ENCODE measurements at regions of chr9 and their contacts with region 1.

Region 1: DNA sequence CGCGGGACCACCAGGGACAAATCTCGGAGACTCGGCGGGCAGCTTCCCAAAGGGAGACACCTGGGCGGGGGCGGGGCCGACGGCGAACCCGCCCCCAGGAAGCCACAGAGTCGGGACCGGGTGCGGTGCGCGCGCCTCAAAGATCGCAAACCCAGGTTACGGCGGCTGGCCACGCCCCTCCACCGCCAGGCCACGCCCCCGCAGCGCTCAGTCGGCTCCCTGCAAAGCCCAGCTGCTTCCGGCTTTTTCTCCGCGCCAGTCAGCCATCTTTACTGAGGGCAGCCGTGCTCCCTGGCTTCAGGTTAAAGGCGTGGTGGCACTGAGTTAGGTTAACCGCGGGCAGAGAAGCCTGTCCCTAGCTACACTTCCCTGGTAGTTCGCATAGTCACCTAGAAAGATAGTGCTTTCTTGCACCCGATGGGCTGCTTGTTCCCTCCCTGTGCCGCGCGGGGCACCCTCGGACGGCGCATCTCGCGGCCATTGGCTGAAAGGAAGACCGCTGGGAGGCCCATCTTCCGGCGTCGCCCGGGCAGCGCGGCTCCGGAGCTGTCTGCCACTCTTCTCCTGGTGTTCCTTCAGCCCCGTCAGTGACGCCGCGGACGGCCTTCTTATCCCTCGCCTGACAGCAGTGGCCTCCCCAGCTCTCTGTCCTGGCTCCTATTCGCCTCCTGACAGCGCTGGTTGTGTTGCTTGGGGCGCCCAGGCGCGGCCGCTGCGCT is at the start of gene TBC1D2:
- DNase-seq: peak; percentile 96 to 99 (median 98)
- ATAC-seq: peak; percentile 95 to 98 (median 96)
- H3K4me3 ChIP-seq: peak within 1 kb of the TSS; percentile 63 to 87 (median 73)
- H3K27ac ChIP-seq: peak within 1 kb of the TSS; percentile 89 to 97 (median 92)
- H3K4me1 ChIP-seq: peaks cover 0 to 8% (median 6%) of the 10 kb centered on the region in 3 donors
- H3K27me3 ChIP-seq: no peaks in the 10 kb centered on the region
- CTCF ChIP-seq: no peak
- total RNA-seq, gene TBC1D2: 1.9 to 5.2 (median 2.4) TPM

Region 2: GRCh38 chr9:98045234-98046179 is 210.2 kb before region 1 on chr9:
- intact Hi-C with region 1: no loop called
- DNase-seq: no peak
- ATAC-seq: peak in 3 of 4 donors; percentile 63 to 73 (median 69)
- H3K4me3 ChIP-seq: peak overlapping the region in 1 of 4 donors; percentile 21
- H3K27ac ChIP-seq: no peak overlapping the region
- H3K4me1 ChIP-seq: no peaks in the 10 kb centered on the region
- H3K27me3 ChIP-seq: no peaks in the 10 kb centered on the region
- CTCF ChIP-seq: no peak

Region 3: GRCh38 chr9:98074115-98074990 is 181.4 kb before region 1 on chr9:
- intact Hi-C with region 1: loop called in 2 of 3 experiments (anchors 10 kb)
- DNase-seq: peak in 5 of 6 donors; percentile 23 to 84 (median 48)
- ATAC-seq: peak; percentile 60 to 84 (median 76)
- H3K4me3 ChIP-seq: no peak overlapping the region
- H3K27ac ChIP-seq: no peak overlapping the region
- H3K4me1 ChIP-seq: peaks cover 0 to 13% (median 0%) of the 10 kb centered on the region in 3 donors
- H3K27me3 ChIP-seq: no peaks in the 10 kb centered on the region
- CTCF ChIP-seq: peak; percentile 83 to 96 (median 90)

Region 4: DNA sequence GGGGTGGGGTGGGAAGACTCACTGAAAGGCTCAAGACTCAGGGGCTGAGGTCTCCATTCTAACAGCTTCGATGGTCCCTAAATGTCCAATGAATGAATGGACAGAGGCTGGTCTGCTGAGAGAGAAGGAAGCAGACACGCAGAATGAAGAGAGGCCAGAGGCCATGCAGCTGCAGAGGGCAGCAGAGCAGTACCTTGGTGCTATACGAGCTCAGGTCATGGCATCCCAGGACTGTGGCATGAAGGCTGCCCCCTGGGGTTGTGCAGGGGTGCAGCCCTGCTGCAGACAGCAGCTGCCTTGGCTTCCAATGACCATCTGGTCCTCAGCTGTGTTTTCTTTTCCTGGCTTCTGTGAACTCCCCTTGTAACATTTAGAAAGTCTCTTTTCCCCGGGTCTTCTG is 48.1 kb before region 1 on chr9:
- intact Hi-C with region 1: loop called in 2 of 3 experiments (anchors 5 kb)
- DNase-seq: no peak
- ATAC-seq: no peak
- H3K4me3 ChIP-seq: no peak overlapping the region
- H3K27ac ChIP-seq: no peak overlapping the region
- H3K4me1 ChIP-seq: no peaks in the 10 kb centered on the region
- H3K27me3 ChIP-seq: no peaks in the 10 kb centered on the region
- CTCF ChIP-seq: no peak